PC-9 (cell line): ENCODE measurements at regions of chr3 and their contacts with region 1.

Region 1: GRCh38 chr3:156674046-156674910 is at the start of gene TIPARP:
- DNase-seq: peak; percentile 95 to 100
- H3K4me3 ChIP-seq: peak within 1 kb of the TSS; percentile 70
- H3K27ac ChIP-seq: peak within 1 kb of the TSS; percentile 85
- H3K4me1 ChIP-seq: peaks cover 44% of the 10 kb centered on the region
- H3K27me3 ChIP-seq: no peaks in the 10 kb centered on the region
- CTCF ChIP-seq: peak; percentile 88
- total RNA-seq, gene TIPARP: 30.3 and 35.0 TPM in 2 replicates

Region 2: DNA sequence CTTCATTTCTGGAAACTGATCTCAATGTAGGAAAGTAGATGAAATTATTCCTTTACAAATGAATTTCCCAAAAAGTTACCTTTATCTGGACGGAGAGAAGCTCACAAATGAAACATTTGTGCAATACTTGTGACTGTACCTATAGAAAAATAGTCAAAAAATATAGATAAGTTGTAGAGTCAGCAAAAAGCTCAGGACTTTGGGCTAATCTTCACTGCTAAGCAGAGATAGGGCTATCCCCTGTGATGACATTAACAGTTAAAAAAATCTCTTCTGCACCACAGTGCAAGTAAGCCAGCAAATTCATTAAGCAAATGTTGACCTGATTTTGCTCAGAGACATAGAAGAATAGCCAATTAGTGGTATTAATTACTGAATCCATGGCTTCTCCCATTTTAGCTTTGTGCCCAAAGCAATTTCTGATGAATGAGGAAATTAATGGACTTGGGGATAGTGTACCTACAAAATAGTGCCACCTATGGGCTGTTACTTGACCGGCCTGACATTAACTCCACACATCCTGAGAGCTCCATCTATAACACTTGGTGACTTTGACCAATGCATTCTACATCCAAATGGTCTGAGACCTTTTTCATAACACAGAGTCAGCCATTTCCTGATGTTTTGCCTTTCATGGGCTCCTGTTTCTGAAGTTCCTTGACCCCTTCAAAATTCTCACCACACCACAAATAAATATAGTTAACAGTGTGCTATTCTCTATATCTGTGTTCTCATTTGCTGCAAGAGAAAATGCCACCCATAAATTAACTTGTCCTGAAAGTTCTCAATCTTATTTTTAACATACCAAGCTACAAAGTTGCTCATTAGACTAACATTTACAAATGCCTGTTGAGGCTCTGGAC is 224.3 kb before region 1 on chr3:
- CTCF ChIA-PET with region 1: no interaction called
- POLR2A ChIA-PET with region 1: no interaction called
- intact Hi-C with region 1: loop called (anchors 10 kb)
- DNase-seq: peak in 1 of 2 experiments; percentile 25
- H3K4me3 ChIP-seq: no peak overlapping the region
- H3K27ac ChIP-seq: no peak overlapping the region
- H3K4me1 ChIP-seq: no peaks in the 10 kb centered on the region
- H3K27me3 ChIP-seq: no peaks in the 10 kb centered on the region
- CTCF ChIP-seq: peak; percentile 65

Region 3: DNA sequence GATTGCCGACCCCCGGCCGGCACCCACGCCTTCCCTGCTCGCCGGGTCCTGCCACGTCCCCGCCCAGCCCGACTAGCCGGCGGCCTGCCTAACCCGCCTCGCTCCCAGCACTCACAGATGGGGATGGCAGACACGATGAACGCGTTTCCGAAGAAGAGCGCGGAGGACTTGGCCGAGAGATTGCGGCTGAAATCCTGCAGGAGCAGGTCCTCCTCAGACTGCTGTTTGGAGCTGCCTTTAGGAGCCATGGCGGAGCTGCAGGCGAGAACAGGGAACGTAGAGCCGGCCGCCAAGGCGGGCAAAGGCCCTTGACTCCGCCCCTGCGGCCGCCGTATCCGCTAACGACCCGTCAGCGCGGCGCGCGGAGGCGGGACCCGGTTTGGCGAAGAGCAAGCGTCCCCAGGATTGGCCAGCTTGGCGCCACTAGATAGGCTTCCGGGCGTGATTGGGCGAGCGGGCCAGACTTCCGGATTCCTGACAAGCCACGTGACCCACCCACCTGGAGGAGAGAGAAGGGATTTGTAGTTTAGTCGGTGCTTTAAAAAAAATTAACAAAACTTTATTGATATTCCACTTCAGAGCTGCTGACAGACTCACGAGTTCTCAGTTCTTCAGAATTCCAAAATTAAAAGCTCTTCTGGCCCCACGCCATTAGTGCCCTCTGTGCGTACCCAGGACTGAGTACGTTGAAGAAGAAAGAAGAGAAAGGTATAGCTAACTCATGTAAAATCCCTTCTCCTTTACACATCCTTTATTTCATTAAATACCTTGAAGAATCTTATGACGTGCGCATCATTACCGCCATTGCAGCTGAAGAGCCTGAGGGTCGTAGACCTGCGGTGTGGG is 119.2 kb before region 1 on chr3 and contains the start of gene SSR3:
- CTCF ChIA-PET with region 1: interaction called, 15 read pairs
- POLR2A ChIA-PET with region 1: interaction called, 4 read pairs
- intact Hi-C with region 1: loop called (anchors 1 kb)
- DNase-seq: peak; percentile 98 to 99
- H3K4me3 ChIP-seq: peak within 1 kb of the TSS; percentile 99
- H3K27ac ChIP-seq: peak within 1 kb of the TSS; percentile 83
- H3K4me1 ChIP-seq: peaks cover 35% of the 10 kb centered on the region
- H3K27me3 ChIP-seq: no peaks in the 10 kb centered on the region
- CTCF ChIP-seq: peak; percentile 19; the same call in 1 of the 2 replicates
- total RNA-seq, gene SSR3: 117 and 152 TPM in 2 replicates

Region 4: DNA sequence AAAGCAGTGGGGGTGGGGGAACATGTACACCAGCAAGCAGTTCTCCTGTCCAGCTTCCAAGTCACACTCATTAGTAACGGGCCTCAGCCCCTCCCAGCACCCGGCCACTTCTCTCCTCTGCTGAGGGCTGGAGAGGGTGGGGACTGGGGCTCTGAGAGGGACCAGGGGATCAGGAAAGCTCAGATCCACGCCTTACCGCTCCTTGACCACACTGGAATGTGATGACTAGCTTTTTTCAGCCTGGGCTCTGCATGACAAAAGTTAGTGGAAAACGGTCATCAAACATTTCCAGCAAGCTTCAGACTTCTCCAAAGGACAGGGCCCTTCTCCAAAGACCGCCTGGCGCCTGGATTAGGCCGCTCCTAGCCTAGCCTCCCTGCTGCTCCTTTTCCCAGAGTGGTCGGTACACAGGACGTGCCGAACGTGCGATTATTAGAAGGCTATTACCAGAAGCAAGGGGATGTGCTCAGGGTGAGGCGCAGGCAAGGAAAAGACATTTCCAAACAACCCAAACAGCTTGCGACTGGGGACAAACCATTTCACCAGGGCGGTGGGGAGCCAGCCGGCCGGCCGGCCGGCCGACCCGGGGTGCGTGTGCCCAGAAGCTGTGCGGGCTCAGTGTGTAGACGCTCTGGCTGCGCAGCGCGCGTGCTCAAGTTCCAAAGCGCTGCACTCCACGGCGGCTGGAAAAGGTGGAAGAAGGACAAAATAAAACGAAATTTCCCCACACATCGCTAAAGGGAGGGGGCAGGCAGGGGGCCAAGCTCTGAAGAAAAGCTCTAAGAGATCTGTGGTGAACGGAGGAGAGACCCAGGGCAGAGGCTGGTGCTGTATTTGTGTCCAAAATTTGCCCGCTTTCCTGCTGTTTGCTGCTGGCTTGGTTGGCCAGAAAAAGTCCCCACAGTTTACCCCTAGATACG is 68.3 kb before region 1 on chr3:
- CTCF ChIA-PET with region 1: no interaction called
- POLR2A ChIA-PET with region 1: interaction called, 4 read pairs
- intact Hi-C with region 1: loop called (anchors 1 kb)
- DNase-seq: peak; percentile 75 to 82
- H3K4me3 ChIP-seq: peak overlapping the region; percentile 56
- H3K27ac ChIP-seq: peak overlapping the region; percentile 49
- H3K4me1 ChIP-seq: peaks cover 44% of the 10 kb centered on the region
- H3K27me3 ChIP-seq: no peaks in the 10 kb centered on the region
- CTCF ChIP-seq: no peak

Region 5: DNA sequence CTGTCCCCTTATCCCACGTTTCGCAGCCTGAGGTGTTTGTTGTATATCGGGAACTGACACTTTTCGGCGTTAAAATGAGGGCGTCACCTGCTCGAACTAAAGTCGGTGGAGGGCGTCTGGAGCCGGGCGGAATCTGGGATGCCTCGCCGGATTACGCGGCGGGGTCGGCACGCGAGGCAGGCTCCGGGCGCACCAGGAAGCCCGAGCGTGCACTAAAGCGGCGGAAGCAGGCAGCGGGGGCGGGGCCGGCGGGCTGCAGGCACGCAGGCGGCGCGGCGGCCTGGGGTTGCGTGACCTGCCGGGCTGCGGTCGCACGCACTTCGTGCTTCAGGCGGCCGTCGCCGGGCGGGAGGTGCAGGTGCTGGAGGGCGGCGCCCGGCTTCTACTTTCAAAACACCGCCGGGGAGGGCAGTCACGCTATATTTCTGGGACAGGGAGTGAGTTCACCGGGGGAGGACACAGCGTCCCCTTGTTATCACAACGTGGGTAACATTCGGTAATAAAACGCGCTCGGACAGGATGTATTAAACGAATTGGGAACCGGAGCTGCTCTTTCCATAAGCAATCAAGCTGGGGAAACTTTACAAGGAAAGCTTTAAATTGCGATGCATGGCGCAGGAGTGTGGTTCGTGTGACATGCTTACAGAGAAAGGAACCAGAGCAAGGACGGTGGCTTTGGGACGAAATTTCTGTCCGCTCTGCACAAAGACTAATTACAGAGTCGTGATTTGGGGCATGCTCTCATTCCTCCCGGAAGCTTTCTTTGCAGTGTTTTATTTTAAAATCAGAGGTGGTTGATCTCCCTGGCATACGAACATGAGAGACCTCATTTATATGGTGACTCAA is 142.7 kb after region 1 on chr3:
- CTCF ChIA-PET with region 1: no interaction called
- POLR2A ChIA-PET with region 1: interaction called, 3 read pairs
- intact Hi-C with region 1: loop called (anchors 2 kb)
- DNase-seq: peak; percentile 86 to 92
- H3K4me3 ChIP-seq: peak overlapping the region; percentile 87
- H3K27ac ChIP-seq: peak overlapping the region; percentile 97
- H3K4me1 ChIP-seq: peaks cover 71% of the 10 kb centered on the region
- H3K27me3 ChIP-seq: no peaks in the 10 kb centered on the region
- CTCF ChIP-seq: peak; percentile 17; the same call in 1 of the 2 replicates

Region 6: GRCh38 chr3:157081681-157082210 is 407.5 kb after region 1 on chr3:
- CTCF ChIA-PET with region 1: interaction called, 7 read pairs
- POLR2A ChIA-PET with region 1: interaction called, 6 read pairs
- intact Hi-C with region 1: loop called (anchors 1 kb)
- DNase-seq: peak; percentile 95 to 98
- H3K4me3 ChIP-seq: peak overlapping the region; percentile 9; the same call in 1 of the 2 replicates
- H3K27ac ChIP-seq: peak overlapping the region; percentile 92
- H3K4me1 ChIP-seq: peaks cover 49% of the 10 kb centered on the region
- H3K27me3 ChIP-seq: no peaks in the 10 kb centered on the region
- CTCF ChIP-seq: peak; percentile 100

Region 7: GRCh38 chr3:157130467-157131251 is 456.4 kb after region 1 on chr3:
- CTCF ChIA-PET with region 1: no interaction called
- POLR2A ChIA-PET with region 1: interaction called, 3 read pairs
- intact Hi-C with region 1: loop called (anchors 1 kb)
- DNase-seq: peak; percentile 92 to 98
- H3K4me3 ChIP-seq: peak overlapping the region; percentile 43; the same call in 1 of the 2 replicates
- H3K27ac ChIP-seq: peak overlapping the region; percentile 94
- H3K4me1 ChIP-seq: peaks cover 77% of the 10 kb centered on the region
- H3K27me3 ChIP-seq: no peaks in the 10 kb centered on the region
- CTCF ChIP-seq: peak; percentile 94

Region 8: DNA sequence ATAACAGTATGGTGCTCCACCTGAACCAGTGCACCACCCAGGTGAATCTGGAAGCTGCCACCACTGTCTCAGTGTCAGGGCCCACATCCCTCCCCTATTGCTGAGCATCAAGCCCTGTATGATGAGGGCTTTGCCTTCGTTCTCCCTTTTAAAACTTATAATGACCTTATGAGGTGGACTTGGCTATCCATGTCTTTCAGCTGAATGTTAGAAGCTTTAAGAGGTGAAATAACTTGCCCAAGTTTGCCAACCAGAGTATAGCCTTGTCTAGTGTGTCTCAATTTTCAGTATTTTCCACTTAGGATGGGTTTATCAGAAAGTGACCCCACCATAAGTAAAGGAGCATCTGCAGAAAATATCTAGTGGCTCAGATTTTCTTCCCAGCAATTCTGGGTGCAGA is 1344.2 kb after region 1 on chr3:
- CTCF ChIA-PET with region 1: no interaction called
- POLR2A ChIA-PET with region 1: no interaction called
- intact Hi-C with region 1: no loop called
- DNase-seq: no peak
- H3K4me3 ChIP-seq: no peak overlapping the region
- H3K27ac ChIP-seq: no peak overlapping the region
- H3K4me1 ChIP-seq: no peaks in the 10 kb centered on the region
- H3K27me3 ChIP-seq: peaks cover 4% of the 10 kb centered on the region; the same call in 1 of the 2 replicates
- CTCF ChIP-seq: no peak